ENCODE measurements at regions of chr10 and their contacts with region 1.

Region 1: DNA sequence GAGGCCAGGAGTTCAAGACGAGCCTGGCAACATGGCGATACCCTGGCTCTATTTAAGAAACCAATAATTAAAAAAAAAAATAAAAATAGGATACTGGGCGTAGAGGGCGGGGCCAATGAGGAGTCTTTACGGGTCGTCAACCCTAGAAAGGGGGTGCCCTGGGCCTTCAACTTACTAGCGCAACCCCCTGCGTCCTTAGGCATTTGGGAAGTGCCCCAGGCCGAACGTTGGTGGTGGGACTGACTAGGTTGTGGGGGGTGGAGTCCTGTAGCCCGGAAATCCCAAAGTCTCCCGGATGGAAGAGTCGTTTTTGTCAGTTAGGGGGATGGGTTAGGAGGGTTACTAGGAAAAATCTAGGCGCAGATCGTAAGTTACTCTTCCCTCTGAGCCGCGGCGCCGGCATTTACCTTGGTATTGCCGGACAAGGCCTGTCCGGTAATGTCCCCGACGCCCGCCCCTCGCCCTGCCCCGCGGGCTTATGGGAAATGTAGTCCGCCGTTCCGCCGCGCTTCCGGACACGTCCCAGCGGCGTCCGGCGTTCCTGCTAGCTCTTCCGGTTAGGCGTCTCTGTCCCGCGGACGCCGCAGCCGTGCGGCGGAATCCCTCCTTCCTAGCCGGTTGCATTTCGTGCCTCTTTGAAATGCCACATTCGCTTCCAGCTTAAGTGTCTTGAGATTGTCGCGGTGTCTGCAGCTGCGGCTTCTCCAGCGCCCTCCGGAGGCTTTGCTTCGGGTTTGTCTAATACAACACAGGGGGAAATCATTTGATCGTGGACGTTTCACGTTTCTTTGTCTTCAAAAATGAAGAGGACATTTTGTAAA is 1.3 kb upstream of the ACBD5 start:
- DNase-seq: peak; percentile 86
- H3K4me3 Mint-ChIP-seq: peak overlapping the region; percentile 98
- H3K27ac Mint-ChIP-seq: peak overlapping the region; percentile 96
- H3K4me1 Mint-ChIP-seq: peaks cover 32% of the 10 kb centered on the region
- H3K27me3 Mint-ChIP-seq: peaks cover 2% of the 10 kb centered on the region

Region 2: DNA sequence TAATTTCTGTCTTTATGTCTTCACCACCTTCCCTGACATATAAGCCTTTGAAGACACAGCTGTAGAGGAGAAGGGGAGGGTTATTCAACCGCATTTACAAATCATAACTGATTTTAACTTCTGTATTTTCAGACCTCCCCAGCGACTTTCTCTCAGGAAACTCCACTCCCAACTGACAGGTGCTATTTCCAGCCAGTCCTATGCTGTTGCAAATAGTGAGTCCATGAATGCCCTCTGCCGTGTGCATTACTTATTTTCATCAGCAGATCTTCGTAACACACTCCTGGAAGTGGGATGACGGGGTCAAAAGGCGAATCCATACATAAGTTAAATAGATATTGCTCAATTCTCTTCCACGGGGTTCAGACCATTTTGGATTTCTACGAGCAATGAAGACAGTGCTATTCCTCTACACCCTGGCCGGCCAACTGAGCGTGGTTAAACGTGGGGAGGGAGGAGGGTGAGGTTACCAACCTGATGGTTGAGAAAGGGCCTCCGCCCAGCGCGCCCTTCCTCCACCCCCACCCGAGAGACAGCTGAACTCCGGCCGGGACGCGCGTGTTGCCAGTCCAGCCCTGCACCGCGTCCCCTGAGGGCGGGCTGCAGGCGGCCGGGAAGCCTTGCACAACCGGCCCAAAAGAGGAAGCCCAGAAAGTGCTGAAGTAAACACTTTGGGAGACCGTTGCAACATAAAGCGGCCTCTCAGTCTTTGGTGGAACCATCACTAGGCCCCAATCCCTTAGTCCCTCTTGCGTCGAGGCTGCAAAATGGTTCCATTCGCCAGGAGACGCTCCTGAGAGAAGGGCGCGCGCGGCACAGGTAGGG is 804.0 kb before region 1 on chr10 and contains the start of gene APBB1IP:
- intact Hi-C with region 1: loop called (anchors 5 kb)
- DNase-seq: peak; percentile 52
- H3K4me3 Mint-ChIP-seq: peak within 1 kb of the TSS; percentile 92
- H3K27ac Mint-ChIP-seq: peak within 1 kb of the TSS; percentile 90
- H3K4me1 Mint-ChIP-seq: peaks cover 39% of the 10 kb centered on the region
- H3K27me3 Mint-ChIP-seq: no peaks in the 10 kb centered on the region
- total RNA-seq, gene APBB1IP: 45.2 and 47.4 TPM in 2 replicates

Region 3: DNA sequence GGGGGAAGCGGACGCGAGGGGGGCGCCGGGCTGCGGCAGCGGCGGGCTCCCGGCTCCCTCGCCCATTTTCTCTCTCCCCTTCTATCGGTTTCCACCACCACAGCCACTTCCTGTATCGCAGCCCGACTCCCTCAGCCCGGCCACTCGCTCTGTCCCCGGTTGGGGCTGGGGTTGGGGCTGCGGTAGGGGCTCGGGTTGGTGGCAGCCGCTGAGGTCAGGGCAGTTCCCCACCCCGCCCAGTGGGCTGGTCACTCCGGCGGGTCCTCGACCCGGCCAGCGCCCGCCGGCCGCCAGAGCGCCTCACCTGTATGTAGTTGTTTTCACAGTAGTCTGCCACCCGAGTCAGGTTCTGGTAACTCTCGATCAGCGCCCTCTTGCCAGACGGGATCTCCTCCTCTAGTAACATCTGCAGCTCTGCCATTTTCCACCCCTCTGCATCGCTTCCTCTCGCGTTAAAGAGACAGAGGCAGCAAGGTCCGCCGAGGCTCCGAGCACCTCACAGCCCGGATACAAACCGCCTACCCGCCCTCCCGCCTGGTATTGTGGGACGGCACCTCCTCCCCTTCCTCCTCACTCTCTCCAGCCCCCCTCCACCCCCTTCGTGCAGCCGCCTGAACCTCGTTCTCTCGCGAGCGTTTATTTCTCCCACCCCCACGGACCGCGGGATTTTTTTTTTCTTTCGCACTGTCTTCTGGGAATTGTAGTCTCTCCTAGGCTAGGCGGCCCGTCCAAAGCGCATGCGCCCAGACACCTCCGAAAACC is 381.2 kb before region 1 on chr10 and contains the start of gene ABI1:
- intact Hi-C with region 1: loop called (anchors 1 kb)
- DNase-seq: peak; percentile 97
- H3K4me3 Mint-ChIP-seq: peak within 1 kb of the TSS; percentile 97
- H3K27ac Mint-ChIP-seq: peak within 1 kb of the TSS; percentile 98
- H3K4me1 Mint-ChIP-seq: peaks cover 30% of the 10 kb centered on the region
- H3K27me3 Mint-ChIP-seq: peaks cover 13% of the 10 kb centered on the region
- total RNA-seq, gene ABI1: 50.1 and 52.7 TPM in 2 replicates

Region 4: DNA sequence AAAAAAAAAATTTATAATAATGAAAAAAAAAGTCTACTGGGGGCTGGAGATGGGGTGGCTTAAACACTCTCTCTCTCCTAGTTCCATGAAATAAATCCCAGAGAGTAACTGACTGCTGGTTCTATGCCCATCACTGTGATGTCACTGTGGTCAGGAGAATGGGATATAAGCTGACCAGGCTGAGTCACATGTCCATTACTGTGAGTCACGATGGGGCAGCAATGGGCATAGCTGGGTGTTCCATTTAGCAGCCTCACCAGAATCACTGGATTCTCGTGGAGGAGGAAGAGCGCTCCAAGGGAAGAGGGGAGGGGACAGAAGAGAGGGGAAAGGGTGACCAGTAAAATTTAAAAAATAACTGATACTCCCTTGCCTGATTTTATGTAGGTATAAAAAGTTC is 49.6 kb before region 1 on chr10:
- intact Hi-C with region 1: no loop called
- DNase-seq: no peak
- H3K4me3 Mint-ChIP-seq: no peak overlapping the region
- H3K27ac Mint-ChIP-seq: no peak overlapping the region
- H3K4me1 Mint-ChIP-seq: no peaks in the 10 kb centered on the region
- H3K27me3 Mint-ChIP-seq: no peaks in the 10 kb centered on the region

Region 5: DNA sequence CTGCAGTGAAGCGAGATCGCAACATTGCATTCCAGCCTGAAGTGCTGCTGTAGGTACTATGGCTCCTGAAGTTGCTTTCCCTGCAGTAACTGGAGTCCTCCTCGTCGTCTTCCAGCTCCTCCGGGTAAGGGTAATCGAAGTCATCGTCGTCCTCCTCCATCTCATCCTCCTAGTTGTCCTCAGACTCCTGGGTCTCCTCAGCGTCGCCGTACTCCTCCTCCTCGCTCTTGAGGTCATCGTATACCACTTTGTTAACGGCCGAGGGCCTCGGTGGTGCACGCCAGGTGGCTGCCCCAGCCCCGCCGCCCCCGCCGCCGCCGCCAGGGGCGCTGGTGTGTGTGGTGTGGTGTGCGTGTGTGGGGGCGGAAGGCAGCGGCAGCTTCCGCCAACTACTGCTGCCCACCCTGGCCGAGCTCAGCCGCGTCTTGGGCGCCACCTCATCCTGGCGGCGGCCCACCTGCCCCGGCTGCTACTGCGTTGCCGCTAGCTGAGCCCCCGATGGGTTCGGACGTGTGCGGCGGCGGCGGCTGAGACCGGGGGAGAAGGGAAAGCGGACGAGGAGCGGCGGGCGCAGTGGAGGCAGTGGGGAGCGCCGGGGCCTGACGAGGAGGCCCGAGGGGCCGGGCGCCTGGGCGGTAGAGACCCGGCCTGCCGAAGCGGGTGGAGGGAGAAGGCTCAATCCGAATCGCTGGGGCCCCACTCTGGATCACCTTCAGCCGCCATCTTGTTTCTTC is 10.6 kb after region 1 on chr10:
- intact Hi-C with region 1: loop called (anchors 1 kb)
- DNase-seq: peak; percentile 74
- H3K4me3 Mint-ChIP-seq: peak overlapping the region; percentile 77
- H3K27ac Mint-ChIP-seq: peak overlapping the region; percentile 79
- H3K4me1 Mint-ChIP-seq: peaks cover 13% of the 10 kb centered on the region
- H3K27me3 Mint-ChIP-seq: peaks cover 2% of the 10 kb centered on the region

Region 6: GRCh38 chr10:27504007-27504807 is 262.3 kb after region 1 on chr10 and contains the start of gene RAB18:
- intact Hi-C with region 1: loop called (anchors 1 kb)
- DNase-seq: peak; percentile 98
- H3K4me3 Mint-ChIP-seq: peak within 1 kb of the TSS; percentile 93
- H3K27ac Mint-ChIP-seq: peak within 1 kb of the TSS; percentile 91
- H3K4me1 Mint-ChIP-seq: peaks cover 46% of the 10 kb centered on the region
- H3K27me3 Mint-ChIP-seq: no peaks in the 10 kb centered on the region
- total RNA-seq, gene RAB18: 55.9 and 56.4 TPM in 2 replicates

Region 7: GRCh38 chr10:28020080-28020860 is 778.4 kb after region 1 on chr10:
- intact Hi-C with region 1: no loop called
- DNase-seq: no peak
- H3K4me3 Mint-ChIP-seq: no peak overlapping the region
- H3K27ac Mint-ChIP-seq: no peak overlapping the region
- H3K4me1 Mint-ChIP-seq: no peaks in the 10 kb centered on the region
- H3K27me3 Mint-ChIP-seq: peaks cover 10% of the 10 kb centered on the region

Region 8: GRCh38 chr10:28676968-28677887 is 1435.4 kb after region 1 on chr10 and contains the start of gene BAMBI:
- intact Hi-C with region 1: loop called (anchors 5 kb)
- DNase-seq: peak; percentile 88
- H3K4me3 Mint-ChIP-seq: peak within 1 kb of the TSS; percentile 74
- H3K27ac Mint-ChIP-seq: no peak within 1 kb of the TSS
- H3K4me1 Mint-ChIP-seq: peaks cover 26% of the 10 kb centered on the region
- H3K27me3 Mint-ChIP-seq: peaks cover 73% of the 10 kb centered on the region
- total RNA-seq, gene BAMBI: 0.16 TPM in 2 replicates